HepG2 (cell line): ENCODE measurements at regions of chr22 and their contacts with region 1.

Region 1: GRCh38 chr22:45246060-45246985 is 5.6 kb upstream of the KIAA0930 start:
- DNase-seq: peak; percentile 98
- ATAC-seq: peak; percentile 87
- H3K4me3 ChIP-seq: peak overlapping the region in 2 of 3 experiments; percentile 3 to 52; a peak in 3 of 6 replicates
- H3K27ac ChIP-seq: peak overlapping the region; percentile 89
- H3K4me1 ChIP-seq: peaks cover 84% of the 10 kb centered on the region
- H3K27me3 ChIP-seq: no peaks in the 10 kb centered on the region
- CTCF ChIP-seq: no peak
- EP300 ChIP-seq: peak in 1 of 2 experiments; percentile 73; a peak in 2 of 4 replicates
- POLR2A ChIP-seq: peak in 1 of 2 experiments; percentile 58; a peak in 3 of 4 replicates
- RAD21 ChIP-seq: no peak

Region 2: GRCh38 chr22:45163451-45164269 is 82.7 kb before region 1 on chr22 and contains the start of gene NUP50:
- CTCF ChIA-PET with region 1: no interaction called
- POLR2A ChIA-PET with region 1: interaction called, 16 read pairs
- in situ Hi-C with region 1: loop called (anchors 10 kb)
- intact Hi-C with region 1: no loop called
- DNase-seq: peak; percentile 89
- ATAC-seq: peak; percentile 64
- H3K4me3 ChIP-seq: peak within 1 kb of the TSS; percentile 87 to 95 (median 94)
- H3K27ac ChIP-seq: peak within 1 kb of the TSS; percentile 83
- H3K4me1 ChIP-seq: peaks cover 73% of the 10 kb centered on the region
- H3K27me3 ChIP-seq: peaks cover 0 to 4% of the 10 kb centered on the region in 2 experiments; a peak in 2 of 5 replicates
- CTCF ChIP-seq: peak; percentile 49
- EP300 ChIP-seq: no peak
- POLR2A ChIP-seq: peak; percentile 73 to 84
- RAD21 ChIP-seq: peak; percentile 42; the same call in 1 of the 2 replicates
- total RNA-seq, gene NUP50: 52.4 and 71.0 TPM in 2 replicates

Region 3: DNA sequence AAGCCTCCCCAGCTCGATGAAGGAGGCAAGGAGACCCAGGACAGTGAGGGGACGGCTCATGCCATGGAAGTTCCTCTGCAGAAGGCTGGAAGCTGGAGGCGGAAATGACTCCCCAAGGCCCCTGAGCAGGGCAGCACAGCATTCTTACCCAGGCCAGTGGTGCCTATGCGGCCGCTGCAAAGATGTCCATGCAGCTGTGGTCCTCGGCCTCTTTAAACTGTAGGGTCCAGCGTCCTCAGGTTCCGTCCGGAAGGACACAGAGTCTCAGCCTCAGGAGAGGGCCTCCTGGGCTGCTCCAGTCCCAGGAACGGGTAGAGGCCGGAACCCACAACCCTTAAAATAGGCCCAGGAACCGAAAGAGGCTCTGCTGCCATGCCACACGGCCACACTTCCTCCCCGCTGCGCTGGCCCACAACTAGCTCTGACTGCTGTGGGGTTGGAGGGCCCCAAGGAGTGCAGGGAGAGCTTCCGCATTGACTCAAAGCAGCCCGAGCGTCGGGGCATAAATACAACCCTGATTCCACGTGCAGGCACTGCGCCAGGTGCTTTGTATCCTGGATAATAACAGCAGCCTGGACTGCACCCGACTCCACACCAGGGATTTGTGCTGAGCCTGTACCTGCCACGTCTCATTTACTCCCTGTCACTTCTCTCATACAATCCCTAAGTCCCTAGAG is 11.1 kb before region 1 on chr22:
- CTCF ChIA-PET with region 1: no interaction called
- POLR2A ChIA-PET with region 1: interaction called, 11 read pairs
- in situ Hi-C with region 1: no loop called
- intact Hi-C with region 1: no loop called
- DNase-seq: no peak
- ATAC-seq: no peak
- H3K4me3 ChIP-seq: no peak overlapping the region
- H3K27ac ChIP-seq: no peak overlapping the region
- H3K4me1 ChIP-seq: peaks cover 67% of the 10 kb centered on the region
- H3K27me3 ChIP-seq: no peaks in the 10 kb centered on the region
- CTCF ChIP-seq: no peak
- EP300 ChIP-seq: no peak
- POLR2A ChIP-seq: no peak
- RAD21 ChIP-seq: no peak